ENCODE measurements at regions of chr17 and their contacts with region 1.

Region 1: GRCh38 chr17:55770148-55770870 is 19.5 kb downstream of the PCTP start:
- DNase-seq: no peak
- H3K4me3 ChIP-seq: no peak overlapping the region
- H3K27me3 ChIP-seq: no peaks in the 10 kb centered on the region
- CTCF ChIP-seq: peak; percentile 46

Region 2: DNA sequence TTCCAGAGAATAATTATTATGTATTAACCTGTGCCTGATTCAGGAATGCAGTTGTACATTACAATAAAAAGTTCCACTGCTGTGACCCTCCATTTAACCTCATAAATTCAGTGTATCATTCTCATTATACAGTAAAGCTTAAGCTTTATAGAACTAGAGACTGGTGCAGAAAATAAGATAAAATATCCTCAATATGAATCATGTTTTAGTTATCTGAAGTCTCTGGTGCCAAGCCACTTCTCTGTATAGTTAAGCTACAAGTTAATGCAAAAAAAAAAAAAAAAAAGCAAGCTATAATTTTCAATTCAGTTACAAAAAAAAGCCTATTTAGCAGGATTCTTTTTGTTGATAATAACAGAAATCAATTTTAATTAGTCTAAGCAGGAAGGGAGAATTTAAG is 236.7 kb before region 1 on chr17:
- CTCF ChIA-PET with region 1: interaction called, 68 read pairs
- POLR2A ChIA-PET with region 1: no interaction called
- DNase-seq: no peak
- H3K4me3 ChIP-seq: no peak overlapping the region
- H3K27me3 ChIP-seq: peaks cover 1% of the 10 kb centered on the region; the same call in 1 of the 2 replicates
- CTCF ChIP-seq: no peak

Region 3: GRCh38 chr17:55641676-55642081 is 128.6 kb before region 1 on chr17:
- CTCF ChIA-PET with region 1: interaction called, 14 read pairs
- POLR2A ChIA-PET with region 1: no interaction called
- DNase-seq: no peak
- H3K4me3 ChIP-seq: no peak overlapping the region
- H3K27me3 ChIP-seq: no peaks in the 10 kb centered on the region
- CTCF ChIP-seq: peak; percentile 81

Region 4: GRCh38 chr17:55717898-55718735 is 52.2 kb before region 1 on chr17:
- CTCF ChIA-PET with region 1: interaction called, 21 read pairs
- POLR2A ChIA-PET with region 1: no interaction called
- DNase-seq: no peak
- H3K4me3 ChIP-seq: no peak overlapping the region
- H3K27me3 ChIP-seq: 0 out of 2 replicates have a peak, but pooled peaks cover 1% of the 10 kb centered on the region
- CTCF ChIP-seq: peak; percentile 78

Region 5: GRCh38 chr17:55735731-55736405 is 34.4 kb before region 1 on chr17:
- CTCF ChIA-PET with region 1: interaction called, 11 read pairs
- POLR2A ChIA-PET with region 1: no interaction called
- DNase-seq: no peak
- H3K4me3 ChIP-seq: no peak overlapping the region
- H3K27me3 ChIP-seq: 0 out of 2 replicates have a peak, but pooled peaks cover 1% of the 10 kb centered on the region
- CTCF ChIP-seq: peak; percentile 81

Region 6: GRCh38 chr17:55783684-55784245 is 13.5 kb after region 1 on chr17:
- CTCF ChIA-PET with region 1: interaction called, 47 read pairs
- POLR2A ChIA-PET with region 1: no interaction called
- DNase-seq: peak; percentile 40
- H3K4me3 ChIP-seq: no peak overlapping the region
- H3K27me3 ChIP-seq: no peaks in the 10 kb centered on the region; the same call in 1 of the 2 replicates
- CTCF ChIP-seq: no peak